ENCODE measurements at regions of chr15 and their contacts with region 1.

Region 1: GRCh38 chr15:76905013-76905839 is at the start of gene SCAPER:
- DNase-seq: peak; percentile 96
- H3K4me3 ChIP-seq: peak within 1 kb of the TSS; percentile 73 to 98 (median 92)
- H3K27ac ChIP-seq: peak within 1 kb of the TSS; percentile 82 to 92 (median 90)
- H3K4me1 ChIP-seq: peaks cover 0 to 31% (median 15%) of the 10 kb centered on the region in 4 donors
- H3K27me3 ChIP-seq: no peaks in the 10 kb centered on the region
- CTCF ChIP-seq: no peak
- EP300 ChIP-seq: no peak
- POLR2A ChIP-seq: peak; percentile 50 to 58
- total RNA-seq, gene SCAPER: 22.5 to 40.7 (median 30.6) TPM

Region 2: GRCh38 chr15:76931397-76932007 is 26.3 kb after region 1 on chr15 and contains the start of gene RCN2:
- intact Hi-C with region 1: loop called (anchors 1 kb)
- DNase-seq: peak; percentile 98
- H3K4me3 ChIP-seq: peak within 1 kb of the TSS; percentile 48 to 91 (median 76)
- H3K27ac ChIP-seq: peak within 1 kb of the TSS; percentile 84 to 93 (median 85)
- H3K4me1 ChIP-seq: peaks cover 0 to 14% (median 7%) of the 10 kb centered on the region in 4 donors
- H3K27me3 ChIP-seq: no peaks in the 10 kb centered on the region
- CTCF ChIP-seq: no peak
- EP300 ChIP-seq: no peak
- POLR2A ChIP-seq: peak; percentile 46 to 76
- total RNA-seq, gene RCN2: 45.5 to 62.8 (median 53.7) TPM

Region 3: DNA sequence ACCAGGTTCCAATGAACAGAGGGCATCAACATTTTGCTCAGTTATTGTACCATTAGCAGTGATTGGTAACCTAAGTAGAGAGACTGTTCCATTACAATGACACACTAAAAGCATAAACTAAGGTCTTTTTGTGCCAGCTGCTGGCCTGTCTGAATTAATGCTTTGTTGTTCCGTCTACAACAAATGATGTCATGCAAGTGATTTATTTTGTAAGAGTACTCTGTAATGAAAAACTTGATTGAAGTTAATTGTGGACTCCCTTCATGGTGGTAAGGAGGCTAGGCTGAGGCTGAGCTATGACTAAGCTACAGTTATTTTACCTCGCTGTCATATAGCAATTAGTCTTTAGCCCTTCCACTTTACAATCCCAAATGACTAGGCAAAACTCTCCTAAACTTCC is 49.5 kb after region 1 on chr15:
- intact Hi-C with region 1: no loop called
- DNase-seq: no peak
- H3K4me3 ChIP-seq: no peak overlapping the region
- H3K27ac ChIP-seq: no peak overlapping the region
- H3K4me1 ChIP-seq: peaks cover 0 to 5% (median 2%) of the 10 kb centered on the region in 4 donors
- H3K27me3 ChIP-seq: no peaks in the 10 kb centered on the region
- CTCF ChIP-seq: no peak
- EP300 ChIP-seq: no peak
- POLR2A ChIP-seq: no peak

Region 4: DNA sequence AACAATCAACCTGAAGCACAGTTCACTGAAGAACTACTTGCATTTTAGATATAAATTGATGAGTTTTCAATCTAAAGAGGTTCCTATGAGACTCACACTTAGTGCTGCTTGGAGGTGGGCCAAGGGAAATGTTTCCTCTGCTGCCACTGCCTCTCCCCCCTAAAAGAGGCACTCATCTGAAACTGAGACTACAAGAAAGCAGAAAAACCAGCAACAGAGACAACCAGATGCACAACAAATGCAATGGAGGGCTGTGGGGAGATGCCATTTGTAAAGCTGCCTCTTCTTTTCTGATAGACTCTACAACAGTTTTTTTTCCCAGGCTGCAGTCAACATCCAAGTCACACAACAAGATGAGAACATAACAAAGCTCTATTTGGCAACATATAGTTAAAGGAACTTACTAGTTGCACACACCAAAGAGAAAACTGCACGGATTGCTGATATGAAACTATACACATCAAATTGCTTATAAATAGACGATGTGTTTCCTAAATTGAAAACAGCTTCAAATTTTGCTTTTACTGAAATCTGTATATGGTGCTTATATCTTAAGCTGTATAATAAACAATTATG is 154.6 kb after region 1 on chr15:
- intact Hi-C with region 1: loop called (anchors 10 kb)
- DNase-seq: no peak
- H3K4me3 ChIP-seq: no peak overlapping the region
- H3K27ac ChIP-seq: peak overlapping the region in 1 of 4 donors; percentile 63
- H3K4me1 ChIP-seq: peaks cover 0 to 73% (median 53%) of the 10 kb centered on the region in 4 donors
- H3K27me3 ChIP-seq: no peaks in the 10 kb centered on the region
- CTCF ChIP-seq: no peak
- EP300 ChIP-seq: no peak
- POLR2A ChIP-seq: no peak

Measured in sigmoid colon (tissue), 7 donors.